ENCODE measurements at regions of chr22 and their contacts with region 1.

Region 1: DNA sequence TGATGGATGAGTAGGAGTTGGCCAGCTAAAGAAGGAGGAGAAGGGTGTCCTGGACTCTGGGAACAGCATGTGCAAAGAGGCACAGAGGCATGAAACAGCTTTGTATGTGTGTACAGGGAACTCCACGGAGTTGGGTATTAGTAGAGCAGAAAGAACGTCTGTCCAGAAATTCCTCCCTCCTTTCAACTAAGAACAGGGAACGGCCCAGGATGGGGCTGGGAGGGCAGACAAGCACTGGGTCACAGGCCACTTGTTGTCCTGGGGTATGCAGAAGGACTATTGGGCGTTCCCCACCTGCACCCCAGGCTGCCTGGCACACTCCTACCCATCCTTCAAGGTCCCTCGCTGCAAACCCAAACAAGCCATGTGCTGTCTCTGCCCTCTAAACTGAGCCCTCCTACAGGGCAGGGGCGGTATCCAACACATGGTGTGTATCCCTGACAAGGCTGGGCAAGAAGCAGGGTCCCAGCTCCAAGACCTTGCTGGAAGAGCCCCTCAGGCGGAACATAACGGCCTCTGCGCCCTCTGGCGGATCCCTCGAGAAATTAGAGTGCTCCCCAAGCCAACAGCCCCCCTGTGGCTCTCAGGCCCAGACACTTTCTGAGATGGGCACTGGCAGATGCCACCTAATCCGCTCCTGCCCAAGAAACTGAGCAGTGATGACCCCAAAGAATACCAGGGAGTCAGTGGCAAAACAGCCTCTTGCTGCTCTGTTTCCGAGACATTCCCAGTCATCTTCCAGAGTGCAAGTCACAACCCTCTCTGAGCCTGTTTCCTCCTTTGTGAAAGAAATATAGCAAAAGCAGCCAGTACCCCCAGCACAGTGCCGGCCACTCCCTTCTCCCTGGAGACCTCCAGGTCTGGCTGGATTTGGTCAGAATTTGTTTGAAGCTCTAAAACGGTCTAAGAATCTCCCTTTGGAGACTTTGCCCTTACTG is 1.6 kb upstream of the ELFN2 start:
- DNase-seq: no peak
- H3K4me3 ChIP-seq: no peak overlapping the region
- H3K27me3 ChIP-seq: peaks cover 16% of the 10 kb centered on the region
- CTCF ChIP-seq: peak; percentile 83

Region 2: DNA sequence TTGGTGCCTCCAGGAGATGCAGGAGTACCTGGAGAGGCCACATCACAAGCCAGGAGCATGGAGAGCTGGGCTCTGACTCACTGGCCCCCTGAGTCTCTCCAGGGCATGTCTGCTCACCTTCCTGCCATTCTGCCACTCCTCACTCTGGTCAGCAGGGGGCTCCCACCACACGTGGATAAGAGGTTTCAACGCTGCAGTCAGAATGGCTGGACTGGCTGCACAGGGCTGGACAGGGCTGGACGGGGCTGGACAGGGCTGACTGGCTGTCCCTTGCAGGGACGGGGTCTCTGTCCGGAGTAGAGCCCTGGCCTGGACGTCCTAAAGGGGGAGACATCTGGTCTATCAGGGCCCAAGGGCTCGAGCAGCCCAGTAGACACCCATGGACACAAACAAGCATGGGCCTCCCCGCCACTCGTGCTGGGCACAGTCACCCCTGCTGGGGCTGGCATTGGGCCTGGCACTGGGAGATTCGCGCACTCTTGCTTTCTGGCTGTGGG is 112.0 kb before region 1 on chr22:
- CTCF ChIA-PET with region 1: interaction called, 196 read pairs
- POLR2A ChIA-PET with region 1: no interaction called
- DNase-seq: no peak
- H3K4me3 ChIP-seq: no peak overlapping the region
- H3K27me3 ChIP-seq: no peaks in the 10 kb centered on the region
- CTCF ChIP-seq: peak; percentile 93

Region 3: GRCh38 chr22:37393746-37394145 is 35.2 kb before region 1 on chr22:
- CTCF ChIA-PET with region 1: interaction called, 13 read pairs
- POLR2A ChIA-PET with region 1: no interaction called
- DNase-seq: no peak
- H3K4me3 ChIP-seq: no peak overlapping the region
- H3K27me3 ChIP-seq: peaks cover 5% of the 10 kb centered on the region; the same call in 1 of the 2 replicates
- CTCF ChIP-seq: no peak

Region 4: DNA sequence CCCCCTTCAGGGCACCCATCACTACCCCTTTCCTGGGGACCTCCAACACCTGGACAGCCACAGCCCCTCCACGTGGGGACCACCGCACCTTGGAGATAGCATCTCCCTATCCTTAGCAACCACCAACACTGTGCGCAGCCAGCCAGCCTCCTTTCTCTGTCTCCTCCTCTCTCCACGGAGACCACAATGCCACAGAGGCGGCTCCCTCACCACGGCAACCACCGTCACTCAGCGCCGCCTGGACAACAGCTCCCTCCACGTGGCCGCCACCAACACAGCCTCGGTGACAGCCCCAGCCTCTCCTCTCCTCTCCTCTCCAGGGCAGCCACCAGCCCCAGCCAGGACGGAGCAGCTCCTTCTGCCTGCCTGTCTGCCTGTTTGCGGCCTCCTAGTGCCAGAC is 12.1 kb before region 1 on chr22:
- CTCF ChIA-PET with region 1: interaction called, 10 read pairs
- POLR2A ChIA-PET with region 1: no interaction called
- DNase-seq: no peak
- H3K4me3 ChIP-seq: no peak overlapping the region
- H3K27me3 ChIP-seq: peaks cover 15% of the 10 kb centered on the region
- CTCF ChIP-seq: no peak

Region 5: GRCh38 chr22:37439347-37439746 is 10.4 kb after region 1 on chr22:
- CTCF ChIA-PET with region 1: interaction called, 21 read pairs
- POLR2A ChIA-PET with region 1: no interaction called
- DNase-seq: no peak
- H3K4me3 ChIP-seq: no peak overlapping the region
- H3K27me3 ChIP-seq: 0 out of 2 replicates have a peak, but pooled peaks cover under 1% of the 10 kb centered on the region
- CTCF ChIP-seq: no peak

Region 6: DNA sequence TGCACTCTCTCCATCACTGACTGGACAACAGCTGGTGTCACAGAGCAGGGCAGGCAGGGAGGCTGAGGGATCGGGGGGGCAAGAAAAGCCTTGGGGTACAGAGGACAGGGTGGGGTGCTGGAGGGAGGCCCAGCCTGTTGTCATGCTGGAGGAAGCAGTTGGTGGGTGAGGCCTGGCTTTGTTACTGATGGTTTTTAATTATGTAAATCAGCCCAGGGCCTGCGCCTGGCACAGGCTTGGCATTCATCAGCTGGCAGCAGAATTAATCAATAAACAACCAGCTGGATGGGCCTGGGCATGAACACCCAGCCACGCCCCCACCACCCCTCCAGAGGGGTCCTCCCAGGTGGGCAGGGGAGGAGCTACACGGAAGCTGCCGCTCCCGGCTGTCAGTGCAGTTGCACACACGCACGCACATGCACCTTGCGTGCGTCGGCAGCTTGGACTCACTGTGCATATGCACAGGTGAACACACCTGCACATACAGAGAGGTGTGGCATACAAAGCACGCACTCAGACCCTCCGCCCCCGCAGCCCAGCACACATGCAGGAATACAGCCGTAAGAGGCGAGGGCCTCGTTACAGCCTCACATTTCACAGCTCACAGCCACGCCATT is 19.7 kb after region 1 on chr22:
- CTCF ChIA-PET with region 1: interaction called, 17 read pairs
- POLR2A ChIA-PET with region 1: no interaction called
- DNase-seq: no peak
- H3K4me3 ChIP-seq: no peak overlapping the region
- H3K27me3 ChIP-seq: peaks cover 5% of the 10 kb centered on the region
- CTCF ChIP-seq: no peak

Region 7: DNA sequence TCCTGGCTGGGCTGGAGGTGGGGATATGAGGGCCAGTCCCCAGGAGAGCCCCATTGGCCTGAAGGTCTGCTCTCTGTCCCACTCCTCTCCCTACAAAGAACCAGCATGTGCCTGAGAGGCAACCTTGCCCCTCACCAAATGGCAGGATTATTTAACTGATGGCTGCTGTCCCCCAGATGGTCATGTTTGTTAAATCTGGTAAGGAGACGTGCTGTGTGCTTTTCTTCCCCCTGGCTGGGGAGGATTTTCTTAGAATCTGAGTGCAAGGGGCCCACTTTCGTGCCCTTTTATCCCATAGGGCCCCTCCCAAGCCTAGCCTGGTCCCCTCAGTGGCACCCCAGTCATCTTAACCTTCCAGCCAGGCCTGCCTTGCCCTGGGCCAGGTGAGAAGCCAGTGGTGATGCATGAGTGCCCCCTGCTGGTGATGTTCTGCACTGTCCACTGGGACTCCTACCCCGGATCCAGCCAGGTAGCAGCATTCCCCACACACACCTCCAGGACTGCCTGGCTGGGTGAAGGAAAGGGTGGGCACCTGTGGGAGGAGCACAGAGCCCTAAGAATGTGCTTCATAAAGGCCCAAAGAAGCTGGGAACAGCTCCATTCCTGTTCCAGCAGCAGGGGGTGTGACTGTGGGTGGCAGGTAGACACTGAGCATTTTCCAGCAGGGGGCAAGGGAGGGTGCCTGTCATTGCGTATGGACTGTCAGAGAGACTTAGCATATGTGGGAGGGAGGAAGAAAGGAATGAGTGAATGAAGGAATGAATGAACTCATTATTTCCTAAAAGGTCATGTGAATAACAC is 28.4 kb after region 1 on chr22:
- CTCF ChIA-PET with region 1: interaction called, 73 read pairs
- POLR2A ChIA-PET with region 1: no interaction called
- DNase-seq: no peak
- H3K4me3 ChIP-seq: no peak overlapping the region
- H3K27me3 ChIP-seq: no peaks in the 10 kb centered on the region; the same call in 1 of the 2 replicates
- CTCF ChIP-seq: peak; percentile 94

Region 8: DNA sequence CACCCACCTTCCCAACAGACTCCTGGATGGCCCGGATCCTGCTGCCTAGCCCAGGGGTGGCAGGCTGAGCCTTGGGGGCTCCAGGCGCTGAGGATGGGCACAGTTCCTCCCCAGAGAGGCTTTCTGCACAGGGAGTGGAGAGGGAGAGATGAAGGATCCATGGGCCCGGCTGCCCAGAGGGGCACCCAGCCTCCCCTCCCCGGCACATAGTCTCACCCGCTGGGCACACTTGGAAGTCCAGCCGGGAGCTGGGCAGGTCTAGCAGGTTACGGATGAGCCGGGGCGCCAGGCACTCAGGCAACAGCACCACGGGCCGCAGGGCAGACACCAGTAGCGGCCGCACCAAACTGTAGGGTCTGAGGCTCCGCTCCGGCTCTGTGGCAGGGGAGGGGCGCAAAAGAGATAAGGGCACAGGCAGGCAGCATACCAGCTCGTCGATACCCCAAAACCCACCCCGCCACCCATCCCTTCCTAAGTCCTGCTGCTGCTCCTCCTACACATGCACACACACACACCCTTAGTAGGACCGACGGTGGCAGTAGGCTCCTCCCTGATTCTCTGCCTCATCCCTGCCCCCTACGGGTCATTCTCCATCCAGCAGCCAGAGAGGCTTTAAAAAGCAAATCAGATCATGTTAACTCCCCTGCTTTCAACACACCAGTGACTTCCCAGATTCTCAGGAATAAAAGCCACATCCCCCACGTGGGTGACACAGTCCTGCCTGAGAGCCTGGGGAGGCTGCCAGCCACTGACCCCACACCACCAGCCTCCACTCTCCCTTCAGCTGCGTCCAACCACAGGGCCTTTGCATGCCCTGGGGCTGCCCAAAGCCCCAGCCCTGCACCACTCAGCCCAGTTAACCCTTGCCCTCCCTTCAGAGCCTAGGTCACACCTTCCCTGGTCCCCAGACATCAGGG is 63.8 kb after region 1 on chr22:
- CTCF ChIA-PET with region 1: no interaction called
- POLR2A ChIA-PET with region 1: no interaction called
- DNase-seq: no peak
- H3K4me3 ChIP-seq: no peak overlapping the region
- H3K27me3 ChIP-seq: no peaks in the 10 kb centered on the region
- CTCF ChIP-seq: peak; percentile 65